Heart right ventricle (tissue), 16 donors: ENCODE measurements at regions of chr2 and their contacts with region 1.

Region 1: GRCh38 chr2:32874931-32875330 is 71.8 kb upstream of the LTBP1 start:
- DNase-seq: no peak
- ATAC-seq: peak in 3 of 8 donors; percentile 40 to 65 (median 55)
- H3K4me3 ChIP-seq: peak overlapping the region in 1 of 10 donors; percentile 15
- H3K27ac ChIP-seq: no peak overlapping the region
- H3K4me1 ChIP-seq: peaks cover 0 to 31% (median 10%) of the 10 kb centered on the region in 9 donors
- H3K27me3 ChIP-seq: no peaks in the 10 kb centered on the region
- CTCF ChIP-seq: no peak

Region 2: GRCh38 chr2:32591669-32592463 is 283.1 kb before region 1 on chr2:
- intact Hi-C with region 1: no loop called
- DNase-seq: no peak
- ATAC-seq: no peak
- H3K4me3 ChIP-seq: no peak overlapping the region
- H3K27ac ChIP-seq: peak overlapping the region in 1 of 10 donors; percentile 46
- H3K4me1 ChIP-seq: peaks cover 0 to 14% (median 0%) of the 10 kb centered on the region in 9 donors
- H3K27me3 ChIP-seq: no peaks in the 10 kb centered on the region
- CTCF ChIP-seq: no peak

Region 3: GRCh38 chr2:32792416-32792815 is 82.5 kb before region 1 on chr2:
- intact Hi-C with region 1: loop called in 1 of 10 experiments (anchors 10 kb)
- DNase-seq: peak; percentile 18 to 67
- ATAC-seq: peak; percentile 83 to 98 (median 93)
- H3K4me3 ChIP-seq: no peak overlapping the region
- H3K27ac ChIP-seq: peak overlapping the region in 5 of 10 donors; percentile 8 to 51 (median 27)
- H3K4me1 ChIP-seq: peaks cover 0 to 38% (median 27%) of the 10 kb centered on the region in 9 donors
- H3K27me3 ChIP-seq: no peaks in the 10 kb centered on the region
- CTCF ChIP-seq: no peak

Region 4: DNA sequence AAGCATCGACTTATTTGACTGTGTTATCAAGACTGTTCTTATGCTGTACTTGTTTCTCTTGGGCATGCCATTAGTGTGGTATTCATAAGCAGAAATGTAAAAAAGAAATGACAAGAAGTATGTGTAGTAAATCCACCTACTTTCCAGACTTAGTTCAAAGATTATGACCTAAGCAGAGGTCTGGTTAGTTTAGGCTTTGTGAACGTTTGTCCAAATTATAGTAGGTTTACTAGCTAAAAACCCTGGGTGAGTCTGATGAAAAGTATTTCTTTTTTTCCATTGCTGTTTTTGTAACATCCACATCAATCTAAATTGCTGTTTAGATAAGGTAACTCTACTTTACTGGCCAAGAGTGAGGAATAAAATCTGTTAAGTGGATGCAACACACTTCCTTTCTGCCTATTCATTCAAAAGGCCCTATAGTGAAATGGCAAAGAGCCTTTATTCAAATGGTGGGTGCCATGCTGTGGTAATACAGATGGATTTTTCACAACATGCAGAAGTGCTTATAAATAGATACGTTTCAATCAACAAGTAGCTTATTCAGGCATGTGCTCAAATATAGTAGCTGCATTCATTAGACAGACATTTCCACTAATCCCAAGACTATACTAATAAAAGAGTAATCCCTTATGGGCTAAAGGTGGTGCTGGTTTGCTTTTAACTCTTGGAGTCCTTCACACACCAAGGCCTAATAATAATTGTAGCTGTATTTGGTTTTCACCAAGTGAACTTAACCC is 50.7 kb before region 1 on chr2:
- intact Hi-C with region 1: no loop called
- DNase-seq: no peak
- ATAC-seq: peak; percentile 18 to 84 (median 63)
- H3K4me3 ChIP-seq: no peak overlapping the region
- H3K27ac ChIP-seq: peak overlapping the region in 9 of 10 donors; percentile 1 to 84 (median 75)
- H3K4me1 ChIP-seq: peaks cover 0 to 33% (median 19%) of the 10 kb centered on the region in 9 donors
- H3K27me3 ChIP-seq: no peaks in the 10 kb centered on the region
- CTCF ChIP-seq: no peak

Region 5: DNA sequence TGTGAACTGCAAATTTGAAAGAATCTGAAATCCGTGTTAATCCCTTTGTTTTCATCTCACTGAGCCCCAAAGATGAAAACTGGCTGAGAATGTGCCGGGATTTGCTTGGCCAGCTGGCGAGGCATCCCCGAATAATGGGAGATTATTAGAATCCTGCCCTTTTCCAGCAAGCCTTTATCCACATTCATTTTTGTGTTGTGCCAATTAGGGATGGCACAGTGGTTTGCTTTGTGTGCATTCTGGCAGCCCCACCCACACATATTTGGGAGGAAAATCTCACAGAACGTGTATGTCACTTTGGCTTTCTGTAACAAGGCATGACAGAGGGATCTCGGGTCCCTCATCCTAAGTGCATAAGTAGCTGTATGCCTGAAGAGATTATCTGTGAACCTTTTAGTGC is 1130.0 kb after region 1 on chr2:
- intact Hi-C with region 1: no loop called
- DNase-seq: no peak
- ATAC-seq: no peak
- H3K4me3 ChIP-seq: no peak overlapping the region
- H3K27ac ChIP-seq: no peak overlapping the region
- H3K4me1 ChIP-seq: no peaks in the 10 kb centered on the region
- H3K27me3 ChIP-seq: no peaks in the 10 kb centered on the region
- CTCF ChIP-seq: no peak